Activated CD4-positive, alpha-beta T cell treated with anti-CD3 and anti-CD28 coated beads for 36 hours (primary cell): ENCODE measurements at regions of chr5 and their contacts with region 1.

Region 1: DNA sequence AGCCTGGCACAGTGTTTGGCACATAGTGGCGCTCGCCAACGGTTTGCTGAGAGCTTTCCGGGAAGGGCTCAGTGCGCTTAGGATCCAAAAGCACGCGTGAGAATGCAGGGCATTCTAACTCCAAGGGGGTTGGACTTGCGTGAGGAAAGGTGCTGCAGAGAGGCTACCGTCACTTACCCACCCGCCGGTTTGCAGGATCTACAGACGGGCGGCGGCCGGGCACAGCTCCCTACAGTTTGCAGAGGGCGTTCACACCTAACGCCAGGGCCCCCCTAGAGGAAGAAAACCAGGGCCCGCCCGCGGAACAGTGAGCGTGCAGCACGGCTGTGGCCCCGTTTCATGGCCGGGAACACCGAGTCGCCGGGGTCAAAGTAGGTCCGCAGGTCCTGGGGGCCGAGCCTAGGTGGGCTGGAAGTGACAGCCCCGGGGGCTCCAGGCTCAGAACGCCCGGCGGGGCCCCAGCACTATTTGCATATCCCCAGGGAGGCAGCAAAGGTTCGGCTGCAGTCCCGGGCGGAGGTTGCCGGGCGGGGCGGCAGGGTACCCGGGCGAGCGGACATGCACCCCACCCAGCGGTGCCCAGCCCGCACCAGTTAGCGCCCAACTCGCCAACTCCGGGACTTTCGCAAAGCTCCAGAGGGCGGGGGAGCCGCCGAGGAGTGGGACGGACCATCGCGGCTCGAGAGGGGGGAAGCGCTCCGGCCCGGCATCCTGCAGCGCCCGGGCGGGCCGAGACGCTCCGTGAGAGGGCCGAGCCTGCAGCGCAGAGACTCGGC is 526 bp upstream of the GALNT10 start:
- DNase-seq: peak; percentile 85
- ATAC-seq: peak; percentile 72
- H3K4me3 Mint-ChIP-seq: peak overlapping the region; percentile 77
- H3K27ac Mint-ChIP-seq: peak overlapping the region; percentile 69
- H3K4me1 Mint-ChIP-seq: peaks cover 28% of the 10 kb centered on the region
- H3K27me3 Mint-ChIP-seq: peaks cover 9% of the 10 kb centered on the region

Region 2: GRCh38 chr5:154214371-154215106 is 24.5 kb after region 1 on chr5:
- CTCF ChIA-PET with region 1: interaction called, 3 read pairs
- POLR2A ChIA-PET with region 1: interaction called, 6 read pairs
- intact Hi-C with region 1: loop called in 1 of 2 experiments (anchors 1 kb)
- DNase-seq: no peak
- ATAC-seq: peak; percentile 93
- H3K4me3 Mint-ChIP-seq: peak overlapping the region; percentile 34
- H3K27ac Mint-ChIP-seq: peak overlapping the region; percentile 87
- H3K4me1 Mint-ChIP-seq: peaks cover 51% of the 10 kb centered on the region
- H3K27me3 Mint-ChIP-seq: no peaks in the 10 kb centered on the region

Region 3: GRCh38 chr5:154333016-154333415 is 143.0 kb after region 1 on chr5:
- CTCF ChIA-PET with region 1: no interaction called
- POLR2A ChIA-PET with region 1: no interaction called
- intact Hi-C with region 1: no loop called
- DNase-seq: no peak
- ATAC-seq: no peak
- H3K4me3 Mint-ChIP-seq: no peak overlapping the region
- H3K27ac Mint-ChIP-seq: no peak overlapping the region
- H3K4me1 Mint-ChIP-seq: no peaks in the 10 kb centered on the region
- H3K27me3 Mint-ChIP-seq: no peaks in the 10 kb centered on the region

Region 4: GRCh38 chr5:154405078-154405792 is 215.2 kb after region 1 on chr5:
- CTCF ChIA-PET with region 1: interaction called, 8 read pairs
- POLR2A ChIA-PET with region 1: interaction called, 4 read pairs
- intact Hi-C with region 1: loop called (anchors 2 to 5 kb)
- DNase-seq: peak; percentile 89
- ATAC-seq: peak; percentile 100
- H3K4me3 Mint-ChIP-seq: peak overlapping the region; percentile 39
- H3K27ac Mint-ChIP-seq: peak overlapping the region; percentile 60
- H3K4me1 Mint-ChIP-seq: peaks cover 8% of the 10 kb centered on the region
- H3K27me3 Mint-ChIP-seq: no peaks in the 10 kb centered on the region

Region 5: DNA sequence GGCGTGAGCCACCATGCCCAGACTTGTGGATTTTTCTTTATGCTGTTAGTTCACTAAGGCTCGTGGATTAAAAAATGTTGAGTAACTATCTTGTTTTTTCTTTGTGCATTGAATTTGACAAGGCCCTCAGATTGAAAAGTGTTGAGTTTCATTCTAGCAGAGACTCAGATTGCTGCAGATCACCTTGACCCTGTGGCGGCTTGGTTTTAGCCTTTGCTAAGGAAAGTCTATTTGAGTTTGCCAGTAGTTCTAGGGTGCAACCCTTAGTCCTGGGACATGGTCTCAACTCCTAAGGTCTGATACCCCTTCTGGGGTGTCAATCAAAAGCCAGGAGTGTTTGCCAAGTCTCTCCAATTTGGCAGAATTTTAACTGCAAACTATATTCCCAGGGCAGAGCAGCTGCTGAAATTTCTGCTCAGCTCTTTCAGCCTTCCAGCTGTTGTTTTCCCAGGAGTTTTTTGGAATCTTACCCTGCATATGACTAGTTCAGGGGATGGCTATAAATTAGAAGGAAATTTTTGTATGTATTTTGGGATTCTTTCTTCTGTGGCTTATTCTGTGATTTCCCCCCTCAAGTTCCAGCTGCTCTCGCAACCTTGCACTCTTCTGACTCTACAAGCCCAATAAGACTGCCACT is 372.4 kb after region 1 on chr5:
- CTCF ChIA-PET with region 1: no interaction called
- POLR2A ChIA-PET with region 1: no interaction called
- intact Hi-C with region 1: no loop called
- DNase-seq: no peak
- ATAC-seq: no peak
- H3K4me3 Mint-ChIP-seq: no peak overlapping the region
- H3K27ac Mint-ChIP-seq: no peak overlapping the region
- H3K4me1 Mint-ChIP-seq: no peaks in the 10 kb centered on the region
- H3K27me3 Mint-ChIP-seq: peaks cover 29% of the 10 kb centered on the region

Region 6: DNA sequence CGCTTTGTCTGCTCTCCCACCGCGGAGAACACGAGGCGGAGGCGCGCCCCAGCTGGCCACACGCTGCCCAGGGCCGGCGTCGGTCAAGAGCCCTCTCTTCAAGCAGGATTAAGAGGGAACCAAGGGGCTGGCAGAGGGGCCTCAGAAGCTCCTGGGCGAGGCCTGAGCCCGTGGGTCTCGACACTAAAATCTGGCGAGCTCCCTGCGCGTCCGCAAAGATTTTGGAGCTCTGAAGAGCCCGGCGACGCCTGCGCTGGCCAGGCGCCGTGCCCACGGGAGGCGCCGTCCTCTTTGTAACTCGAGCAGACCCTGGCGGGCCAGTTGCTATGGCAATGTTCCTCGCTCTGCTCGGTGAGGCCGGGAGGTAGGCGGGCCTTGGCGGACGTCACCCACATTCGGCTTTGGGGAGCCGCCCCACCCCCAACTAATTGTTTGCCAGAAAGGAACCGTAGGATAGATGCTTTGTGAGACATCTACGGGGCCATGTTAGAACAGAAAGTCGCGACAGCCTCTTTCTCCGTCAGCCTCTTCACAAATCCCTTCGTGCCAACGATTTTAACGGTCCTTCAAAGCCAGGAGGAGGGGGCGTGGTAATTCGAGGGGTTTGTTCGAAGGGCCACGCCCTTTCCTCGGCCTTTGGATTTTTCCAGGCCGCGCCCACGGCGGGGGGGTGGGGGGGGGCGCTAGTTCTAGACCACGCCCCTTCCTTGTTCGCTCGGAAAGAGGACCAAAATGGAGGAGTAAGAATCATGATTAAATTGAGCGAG is 667.7 kb after region 1 on chr5:
- CTCF ChIA-PET with region 1: no interaction called
- POLR2A ChIA-PET with region 1: no interaction called
- intact Hi-C with region 1: loop called in 1 of 2 experiments (anchors 5 kb)
- DNase-seq: peak; percentile 90
- ATAC-seq: peak; percentile 59
- H3K4me3 Mint-ChIP-seq: peak overlapping the region; percentile 99
- H3K27ac Mint-ChIP-seq: peak overlapping the region; percentile 98
- H3K4me1 Mint-ChIP-seq: peaks cover 34% of the 10 kb centered on the region
- H3K27me3 Mint-ChIP-seq: no peaks in the 10 kb centered on the region